PC-9 (cell line): ENCODE measurements at regions of chr14 and their contacts with region 1.

Region 1: DNA sequence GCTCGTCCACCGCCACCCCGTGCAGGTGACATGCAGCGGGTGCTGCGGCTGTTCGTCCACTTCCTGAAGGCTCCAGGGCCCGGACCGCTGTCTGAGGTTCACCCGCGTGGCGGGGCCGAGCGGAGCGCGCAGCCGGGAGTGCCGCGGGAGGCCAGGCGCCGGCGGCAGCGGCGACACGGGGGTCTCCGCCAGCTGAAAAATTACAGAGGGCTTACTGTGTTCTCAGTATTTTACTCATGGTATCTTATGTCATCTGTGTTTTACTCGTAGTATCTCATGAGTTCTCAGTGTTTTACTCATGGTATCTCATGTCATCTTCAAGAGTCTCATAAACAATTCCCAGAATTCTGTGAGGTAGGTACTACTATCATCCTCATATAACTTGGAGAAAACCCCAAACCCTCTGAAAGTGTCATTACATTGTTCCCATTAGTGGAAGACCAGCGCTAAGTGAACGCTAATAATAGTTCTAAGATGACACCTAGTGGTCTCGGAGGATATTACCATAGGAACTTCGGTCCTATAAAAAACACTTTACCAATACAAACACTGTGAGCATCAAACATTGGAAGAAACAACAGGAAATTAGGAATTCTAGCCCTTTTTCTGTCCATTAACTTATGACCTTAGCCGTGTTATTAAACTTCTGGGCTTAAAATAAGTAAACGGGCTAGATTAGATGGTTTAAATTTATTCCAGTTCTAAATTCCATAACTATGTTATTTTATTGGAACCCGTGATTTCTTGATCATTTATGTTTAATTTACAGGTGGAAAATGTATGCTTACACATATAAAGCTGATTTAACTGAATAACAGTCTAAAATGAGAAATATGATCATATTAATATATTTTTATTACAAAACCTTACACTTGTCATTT is 32.4 kb downstream of the AK7 start:
- DNase-seq: peak in 1 of 2 experiments; percentile 55
- H3K4me3 ChIP-seq: peak overlapping the region; percentile 26; the same call in 1 of the 2 replicates
- H3K27ac ChIP-seq: no peak overlapping the region
- H3K4me1 ChIP-seq: no peaks in the 10 kb centered on the region
- H3K27me3 ChIP-seq: no peaks in the 10 kb centered on the region
- CTCF ChIP-seq: peak; percentile 85

Region 2: GRCh38 chr14:95561001-95561412 is 863.3 kb before region 1 on chr14:
- CTCF ChIA-PET with region 1: no interaction called
- POLR2A ChIA-PET with region 1: no interaction called
- intact Hi-C with region 1: loop called (anchors 10 kb)
- DNase-seq: peak; percentile 67 to 68
- H3K4me3 ChIP-seq: no peak overlapping the region
- H3K27ac ChIP-seq: no peak overlapping the region
- H3K4me1 ChIP-seq: no peaks in the 10 kb centered on the region
- H3K27me3 ChIP-seq: no peaks in the 10 kb centered on the region
- CTCF ChIP-seq: peak; percentile 92

Region 3: GRCh38 chr14:95683793-95684192 is 740.6 kb before region 1 on chr14:
- CTCF ChIA-PET with region 1: interaction called, 19 read pairs
- POLR2A ChIA-PET with region 1: no interaction called
- intact Hi-C with region 1: no loop called
- DNase-seq: no peak
- H3K4me3 ChIP-seq: no peak overlapping the region
- H3K27ac ChIP-seq: no peak overlapping the region
- H3K4me1 ChIP-seq: no peaks in the 10 kb centered on the region
- H3K27me3 ChIP-seq: peaks cover 6% of the 10 kb centered on the region; the same call in 1 of the 2 replicates
- CTCF ChIP-seq: peak; percentile 45

Region 4: DNA sequence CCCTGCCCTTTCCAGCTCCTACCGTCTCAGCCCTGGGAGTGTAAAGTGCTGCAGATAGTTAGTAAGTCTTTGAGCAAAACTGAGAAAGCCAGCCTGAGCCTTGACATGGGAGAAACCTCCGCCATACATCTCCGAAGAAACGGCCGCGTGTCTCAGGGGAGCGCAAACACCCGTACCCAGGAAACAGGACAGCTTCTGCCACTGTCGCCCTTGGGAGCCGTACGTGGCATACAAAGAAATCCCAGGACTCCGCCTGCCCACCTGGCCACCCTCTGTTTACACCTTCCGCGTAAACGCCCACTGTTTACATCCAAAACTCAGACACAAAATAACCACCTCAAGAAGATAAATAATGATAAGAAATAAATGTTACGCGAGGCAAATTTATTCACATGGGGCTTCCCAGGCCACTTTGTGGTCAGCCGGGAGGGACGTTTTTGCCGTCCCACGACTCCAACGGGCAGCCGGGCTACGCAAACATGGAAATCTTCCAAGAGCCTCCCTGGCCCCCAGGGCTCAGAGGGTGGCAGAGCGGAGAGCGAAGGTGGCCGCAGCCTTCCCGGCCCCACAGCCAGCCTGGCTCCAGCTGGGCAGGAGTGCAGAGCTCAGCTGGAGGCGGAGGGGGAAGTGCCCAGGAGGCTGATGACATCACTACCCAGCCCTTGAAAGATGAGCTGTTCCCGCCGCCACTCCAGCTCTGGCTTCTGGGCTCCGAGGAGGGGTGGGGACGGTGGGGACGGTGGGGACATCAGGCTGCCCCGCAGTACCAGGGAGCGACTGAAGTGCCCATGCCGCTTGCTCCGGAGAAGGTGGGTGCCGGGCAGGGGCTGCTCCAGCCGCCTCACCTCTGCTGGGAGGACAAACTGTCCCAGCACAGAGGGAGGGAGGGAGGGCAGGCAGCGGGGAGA is 219.9 kb before region 1 on chr14 and contains the start of gene BDKRB2:
- CTCF ChIA-PET with region 1: no interaction called
- POLR2A ChIA-PET with region 1: no interaction called
- intact Hi-C with region 1: no loop called
- DNase-seq: peak; percentile 57 to 86
- H3K4me3 ChIP-seq: peak within 1 kb of the TSS; percentile 59
- H3K27ac ChIP-seq: peak within 1 kb of the TSS; percentile 68
- H3K4me1 ChIP-seq: peaks cover 40% of the 10 kb centered on the region
- H3K27me3 ChIP-seq: no peaks in the 10 kb centered on the region
- CTCF ChIP-seq: no peak
- total RNA-seq, gene BDKRB2: 0.28 and 0.43 TPM in 2 replicates

Region 5: GRCh38 chr14:96297000-96297399 is 127.3 kb before region 1 on chr14:
- CTCF ChIA-PET with region 1: no interaction called
- POLR2A ChIA-PET with region 1: no interaction called
- intact Hi-C with region 1: loop called (anchors 2 kb)
- DNase-seq: no peak
- H3K4me3 ChIP-seq: no peak overlapping the region
- H3K27ac ChIP-seq: no peak overlapping the region
- H3K4me1 ChIP-seq: no peaks in the 10 kb centered on the region
- H3K27me3 ChIP-seq: no peaks in the 10 kb centered on the region
- CTCF ChIP-seq: peak; percentile 67